IMR-90 (cell line): ENCODE measurements at regions of chr1 and their contacts with region 1.

Region 1: DNA sequence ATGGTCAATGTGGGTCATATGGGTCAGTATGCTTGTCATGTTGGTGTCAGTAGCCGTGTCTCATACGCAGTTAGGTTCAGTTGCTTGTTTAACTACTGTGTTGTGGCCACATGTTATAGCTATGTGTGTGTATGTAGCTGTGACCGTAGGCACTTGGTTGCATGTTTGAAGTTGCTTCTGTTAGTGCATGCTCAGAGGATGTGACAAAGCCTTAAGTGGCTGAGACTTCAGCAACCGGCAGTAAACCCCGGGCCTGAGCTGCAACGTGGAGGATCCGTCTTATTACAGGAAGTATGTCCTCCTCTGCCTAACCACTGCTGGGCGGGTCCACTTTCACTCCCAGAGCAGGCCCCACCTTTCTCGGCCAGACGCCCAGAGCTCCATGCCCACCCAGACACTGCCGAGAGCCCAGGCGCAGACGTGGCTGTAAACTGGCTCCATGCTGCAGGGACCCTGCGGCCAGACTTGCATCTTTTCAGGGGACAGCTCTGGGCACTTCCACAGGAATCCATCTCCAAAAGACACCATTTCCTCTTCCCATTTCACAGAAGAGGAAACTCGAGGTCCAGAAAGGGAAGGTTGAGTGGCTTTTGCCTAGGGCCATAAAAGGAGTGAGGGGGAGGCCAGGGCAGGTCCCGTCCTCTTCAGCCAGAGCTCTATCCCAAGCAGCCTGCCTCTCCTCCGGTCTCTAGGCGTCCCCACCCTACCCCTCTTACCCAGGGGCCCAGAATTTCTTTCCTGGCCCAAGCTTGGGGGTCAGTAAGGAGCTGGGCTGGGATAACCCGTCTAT is 2.1 kb downstream of the TCEA3 start:
- DNase-seq: peak; percentile 82
- ATAC-seq: peak; percentile 86
- H3K4me3 ChIP-seq: no peak overlapping the region
- H3K27ac ChIP-seq: peak overlapping the region; percentile 76
- H3K4me1 ChIP-seq: peaks cover 16% of the 10 kb centered on the region
- H3K27me3 ChIP-seq: no peaks in the 10 kb centered on the region
- CTCF ChIP-seq: no peak
- POLR2A ChIP-seq: no peak
- RAD21 ChIP-seq: no peak

Region 2: DNA sequence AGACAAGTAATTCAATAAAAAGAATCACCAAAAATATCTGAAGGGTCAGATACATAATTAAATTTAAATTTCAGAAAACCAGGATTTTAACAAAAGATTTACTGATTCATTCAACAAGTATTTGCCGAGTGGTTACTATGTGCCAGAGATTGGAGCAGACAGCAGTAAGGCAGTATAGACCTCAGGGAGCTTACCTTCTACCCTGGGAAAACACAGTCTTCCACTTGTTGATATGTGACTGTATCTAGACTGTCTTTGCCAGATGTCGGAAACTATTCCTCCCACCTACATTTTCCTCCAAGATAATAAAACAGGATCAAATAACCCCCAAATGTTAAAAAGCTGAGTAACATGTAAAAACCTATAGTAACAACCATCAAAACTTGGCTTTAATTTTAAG is 84.6 kb before region 1 on chr1:
- CTCF ChIA-PET with region 1: no interaction called
- POLR2A ChIA-PET with region 1: no interaction called
- dilution Hi-C with region 1: loop called (anchors 10 kb)
- in situ Hi-C with region 1: no loop called
- intact Hi-C with region 1: no loop called
- DNase-seq: peak; percentile 25
- ATAC-seq: no peak
- H3K4me3 ChIP-seq: no peak overlapping the region
- H3K27ac ChIP-seq: no peak overlapping the region
- H3K4me1 ChIP-seq: peaks cover 4% of the 10 kb centered on the region; the same call in 1 of the 2 replicates
- H3K27me3 ChIP-seq: no peaks in the 10 kb centered on the region
- CTCF ChIP-seq: no peak
- POLR2A ChIP-seq: no peak
- RAD21 ChIP-seq: no peak

Region 3: GRCh38 chr1:23577056-23578004 is 154.9 kb after region 1 on chr1:
- CTCF ChIA-PET with region 1: no interaction called
- POLR2A ChIA-PET with region 1: interaction called, 10 read pairs
- dilution Hi-C with region 1: no loop called
- in situ Hi-C with region 1: no loop called
- intact Hi-C with region 1: no loop called
- DNase-seq: peak; percentile 95
- ATAC-seq: peak; percentile 72
- H3K4me3 ChIP-seq: peak overlapping the region; percentile 12; the same call in 1 of the 2 replicates
- H3K27ac ChIP-seq: peak overlapping the region; percentile 96
- H3K4me1 ChIP-seq: peaks cover 28% of the 10 kb centered on the region
- H3K27me3 ChIP-seq: no peaks in the 10 kb centered on the region
- CTCF ChIP-seq: no peak
- POLR2A ChIP-seq: peak; percentile 87
- RAD21 ChIP-seq: no peak; the same call in 1 of the 2 replicates